ENCODE measurements at regions of chr1 and their contacts with region 1.

Region 1: DNA sequence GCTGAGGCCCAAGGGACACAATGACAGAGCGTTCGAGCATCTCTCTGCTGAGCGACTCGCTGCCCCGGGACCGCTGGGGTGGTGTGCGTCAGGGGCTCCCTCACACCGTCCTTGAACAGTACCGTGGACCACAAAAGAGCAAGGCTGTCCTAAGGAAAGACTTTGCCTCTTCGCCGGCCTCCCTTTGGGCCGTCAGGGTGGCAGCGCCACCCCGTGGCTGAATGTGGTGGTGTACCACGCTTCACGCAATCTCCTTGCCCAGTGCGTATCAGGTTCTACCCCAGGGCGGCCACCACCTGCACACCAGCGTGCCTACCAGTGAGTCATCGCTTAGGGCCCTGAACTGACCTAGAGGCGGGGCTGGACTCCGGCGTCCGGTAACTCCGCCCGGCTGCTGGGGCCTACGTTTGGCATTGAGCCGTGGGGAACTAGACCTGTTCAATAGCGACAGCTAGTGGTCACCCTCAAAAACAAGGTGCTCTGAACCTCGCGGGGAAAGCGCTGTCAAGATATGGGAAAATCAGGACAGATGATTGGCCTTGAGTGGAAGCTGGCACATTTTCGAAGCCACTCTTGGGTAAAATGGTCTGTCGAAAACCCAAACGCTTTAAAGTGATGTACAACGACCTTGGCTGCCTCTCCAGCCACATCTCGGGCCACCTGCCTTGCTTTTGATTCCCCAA is 8.1 kb upstream of the TRAF3IP3 start:
- DNase-seq: peak; percentile 88
- ATAC-seq: peak; percentile 98
- H3K4me3 ChIP-seq: peak overlapping the region in 4 of 5 experiments; percentile 37 to 56 (median 52)
- H3K4me3 Mint-ChIP-seq: peak overlapping the region; percentile 84
- H3K27ac ChIP-seq: peak overlapping the region; percentile 44 to 50
- H3K27ac Mint-ChIP-seq: peak overlapping the region; percentile 75
- H3K4me1 ChIP-seq: peaks cover 29 to 33% of the 10 kb centered on the region in 2 donors
- H3K4me1 Mint-ChIP-seq: peaks cover 35% of the 10 kb centered on the region
- H3K27me3 ChIP-seq: no peaks in the 10 kb centered on the region
- H3K27me3 Mint-ChIP-seq: no peaks in the 10 kb centered on the region
- CTCF ChIP-seq: peak; percentile 98

Region 2: GRCh38 chr1:209565759-209566678 is 181.7 kb before region 1 on chr1:
- CTCF ChIA-PET with region 1: interaction called, 11 read pairs
- POLR2A ChIA-PET with region 1: no interaction called
- intact Hi-C with region 1: loop called (anchors 1 kb)
- DNase-seq: peak; percentile 63
- ATAC-seq: no peak
- H3K4me3 ChIP-seq: no peak overlapping the region
- H3K4me3 Mint-ChIP-seq: no peak overlapping the region
- H3K27ac ChIP-seq: no peak overlapping the region
- H3K27ac Mint-ChIP-seq: no peak overlapping the region
- H3K4me1 ChIP-seq: peaks cover 4 to 5% of the 10 kb centered on the region in 2 donors
- H3K4me1 Mint-ChIP-seq: peaks cover 5% of the 10 kb centered on the region
- H3K27me3 ChIP-seq: peaks cover 0 to 20% (median 11%) of the 10 kb centered on the region in 4 experiments
- H3K27me3 Mint-ChIP-seq: peaks cover 39% of the 10 kb centered on the region
- CTCF ChIP-seq: peak; percentile 75

Region 3: GRCh38 chr1:209692745-209693504 is 54.8 kb before region 1 on chr1:
- CTCF ChIA-PET with region 1: interaction called, 3 read pairs
- POLR2A ChIA-PET with region 1: no interaction called
- intact Hi-C with region 1: loop called (anchors 1 kb)
- DNase-seq: peak; percentile 70
- ATAC-seq: peak; percentile 41
- H3K4me3 ChIP-seq: no peak overlapping the region
- H3K4me3 Mint-ChIP-seq: no peak overlapping the region
- H3K27ac ChIP-seq: no peak overlapping the region
- H3K27ac Mint-ChIP-seq: no peak overlapping the region
- H3K4me1 ChIP-seq: peaks cover 4 to 7% of the 10 kb centered on the region in 2 donors
- H3K4me1 Mint-ChIP-seq: peaks cover 3% of the 10 kb centered on the region
- H3K27me3 ChIP-seq: peaks cover 0 to 3% (median 1%) of the 10 kb centered on the region in 4 experiments
- H3K27me3 Mint-ChIP-seq: peaks cover 19% of the 10 kb centered on the region
- CTCF ChIP-seq: peak; percentile 90

Region 4: GRCh38 chr1:209769171-209769904 is 21.6 kb after region 1 on chr1:
- CTCF ChIA-PET with region 1: interaction called, 48 read pairs
- POLR2A ChIA-PET with region 1: interaction called, 9 read pairs
- intact Hi-C with region 1: no loop called
- DNase-seq: peak; percentile 47
- ATAC-seq: peak; percentile 57
- H3K4me3 ChIP-seq: peak overlapping the region; percentile 58 to 83 (median 68)
- H3K4me3 Mint-ChIP-seq: no peak overlapping the region
- H3K27ac ChIP-seq: peak overlapping the region; percentile 57 to 87
- H3K27ac Mint-ChIP-seq: no peak overlapping the region
- H3K4me1 ChIP-seq: peaks cover 65 to 80% of the 10 kb centered on the region in 2 donors
- H3K4me1 Mint-ChIP-seq: peaks cover 29% of the 10 kb centered on the region
- H3K27me3 ChIP-seq: no peaks in the 10 kb centered on the region
- H3K27me3 Mint-ChIP-seq: no peaks in the 10 kb centered on the region
- CTCF ChIP-seq: no peak

Region 5: GRCh38 chr1:209784265-209785169 is 36.8 kb after region 1 on chr1 and contains the start of gene C1orf74:
- CTCF ChIA-PET with region 1: interaction called, 7 read pairs
- POLR2A ChIA-PET with region 1: no interaction called
- intact Hi-C with region 1: loop called (anchors 1 kb)
- DNase-seq: peak; percentile 99
- ATAC-seq: peak; percentile 98
- H3K4me3 ChIP-seq: peak within 1 kb of the TSS; percentile 54 to 90 (median 79)
- H3K4me3 Mint-ChIP-seq: peak within 1 kb of the TSS; percentile 92
- H3K27ac ChIP-seq: peak within 1 kb of the TSS; percentile 86 to 90
- H3K27ac Mint-ChIP-seq: peak within 1 kb of the TSS; percentile 95
- H3K4me1 ChIP-seq: peaks cover 14 to 20% of the 10 kb centered on the region in 2 donors
- H3K4me1 Mint-ChIP-seq: peaks cover 25% of the 10 kb centered on the region
- H3K27me3 ChIP-seq: peaks cover 0 to 12% (median 1%) of the 10 kb centered on the region in 4 experiments
- H3K27me3 Mint-ChIP-seq: peaks cover 4% of the 10 kb centered on the region
- CTCF ChIP-seq: no peak
- total RNA-seq, gene C1orf74: 3.4 and 4.1 TPM in 2 replicates

Region 6: DNA sequence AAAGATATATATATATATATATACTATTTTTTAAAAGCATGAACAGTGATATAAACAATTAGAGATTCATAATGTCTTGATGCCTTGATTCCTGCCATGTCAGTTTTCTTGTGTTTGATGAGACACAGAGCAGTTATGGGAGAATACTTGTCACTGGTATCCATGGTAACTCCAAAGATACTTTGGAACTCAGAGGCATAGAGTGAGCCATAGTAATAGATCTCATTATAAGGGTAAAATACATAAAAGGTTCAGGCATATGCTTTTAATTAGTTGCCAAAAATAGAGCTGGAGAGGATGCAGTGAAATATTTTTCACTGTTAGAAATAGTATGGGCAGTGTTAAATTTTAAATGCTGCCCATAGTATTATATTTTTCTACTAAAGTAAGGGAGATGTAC is 324.4 kb after region 1 on chr1:
- CTCF ChIA-PET with region 1: no interaction called
- POLR2A ChIA-PET with region 1: no interaction called
- intact Hi-C with region 1: no loop called
- DNase-seq: no peak
- ATAC-seq: no peak
- H3K4me3 ChIP-seq: no peak overlapping the region
- H3K4me3 Mint-ChIP-seq: no peak overlapping the region
- H3K27ac ChIP-seq: no peak overlapping the region
- H3K27ac Mint-ChIP-seq: no peak overlapping the region
- H3K4me1 ChIP-seq: no peaks in the 10 kb centered on the region
- H3K4me1 Mint-ChIP-seq: no peaks in the 10 kb centered on the region
- H3K27me3 ChIP-seq: no peaks in the 10 kb centered on the region
- H3K27me3 Mint-ChIP-seq: peaks cover 6% of the 10 kb centered on the region
- CTCF ChIP-seq: no peak